Natural killer cell (primary cell): ENCODE measurements at regions of chr19 and their contacts with region 1.

Region 1: DNA sequence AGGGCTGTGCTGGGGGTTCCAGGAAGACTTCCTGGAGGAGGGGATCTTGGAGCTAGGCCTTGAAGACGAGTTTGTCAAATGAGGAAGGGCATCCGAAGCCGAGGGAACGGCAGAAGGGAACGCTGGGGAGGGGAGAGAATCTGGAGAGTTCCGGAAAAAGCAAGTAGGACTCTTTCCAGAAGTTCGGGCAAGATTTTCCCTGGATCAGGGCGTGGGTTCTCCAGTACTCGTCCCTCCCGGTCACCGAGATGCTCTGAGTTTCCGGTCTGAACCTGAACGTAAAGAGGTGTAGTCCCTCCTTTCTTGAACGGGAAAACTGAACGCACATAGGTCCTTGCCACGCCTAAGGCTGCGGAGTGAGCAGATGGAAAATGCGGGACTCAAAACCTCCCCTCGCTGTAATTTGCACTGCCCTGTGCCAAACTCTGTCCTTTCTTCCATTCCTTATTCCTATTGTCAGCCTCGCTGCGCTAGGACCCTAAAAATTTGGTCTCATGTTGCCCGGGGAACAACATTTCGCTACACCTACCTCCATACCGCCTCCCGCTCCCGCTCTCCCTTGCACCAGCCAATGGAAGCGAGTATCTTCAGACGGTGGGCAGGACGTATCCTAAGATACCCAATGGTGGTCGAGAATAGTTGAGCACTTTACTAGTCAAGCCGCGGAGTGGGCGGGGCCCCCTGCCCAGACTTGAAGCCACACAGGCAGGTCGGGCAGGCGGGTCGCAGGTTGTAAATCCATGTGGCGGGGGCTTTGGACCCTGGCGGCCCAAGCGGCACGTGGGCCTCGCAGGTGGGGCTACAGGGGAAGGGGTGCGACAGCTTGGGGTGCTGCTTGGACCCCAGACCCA is at the start of gene GTPBP3:
- DNase-seq: peak; percentile 93 to 98
- ATAC-seq: peak; percentile 86 to 98 (median 90)
- H3K4me3 ChIP-seq: peak within 1 kb of the TSS; percentile 72
- H3K4me3 Mint-ChIP-seq: peak within 1 kb of the TSS; percentile 93
- H3K27ac ChIP-seq: peak within 1 kb of the TSS; percentile 78
- H3K27ac Mint-ChIP-seq: peak within 1 kb of the TSS; percentile 88 to 93
- H3K4me1 ChIP-seq: peaks cover 40% of the 10 kb centered on the region
- H3K4me1 Mint-ChIP-seq: peaks cover 25 to 40% of the 10 kb centered on the region in 2 donors
- H3K27me3 ChIP-seq: no peaks in the 10 kb centered on the region
- H3K27me3 Mint-ChIP-seq: no peaks in the 10 kb centered on the region
- CTCF ChIP-seq: no peak
- total RNA-seq, gene GTPBP3: 21.6 to 33.0 (median 27.7) TPM

Region 2: DNA sequence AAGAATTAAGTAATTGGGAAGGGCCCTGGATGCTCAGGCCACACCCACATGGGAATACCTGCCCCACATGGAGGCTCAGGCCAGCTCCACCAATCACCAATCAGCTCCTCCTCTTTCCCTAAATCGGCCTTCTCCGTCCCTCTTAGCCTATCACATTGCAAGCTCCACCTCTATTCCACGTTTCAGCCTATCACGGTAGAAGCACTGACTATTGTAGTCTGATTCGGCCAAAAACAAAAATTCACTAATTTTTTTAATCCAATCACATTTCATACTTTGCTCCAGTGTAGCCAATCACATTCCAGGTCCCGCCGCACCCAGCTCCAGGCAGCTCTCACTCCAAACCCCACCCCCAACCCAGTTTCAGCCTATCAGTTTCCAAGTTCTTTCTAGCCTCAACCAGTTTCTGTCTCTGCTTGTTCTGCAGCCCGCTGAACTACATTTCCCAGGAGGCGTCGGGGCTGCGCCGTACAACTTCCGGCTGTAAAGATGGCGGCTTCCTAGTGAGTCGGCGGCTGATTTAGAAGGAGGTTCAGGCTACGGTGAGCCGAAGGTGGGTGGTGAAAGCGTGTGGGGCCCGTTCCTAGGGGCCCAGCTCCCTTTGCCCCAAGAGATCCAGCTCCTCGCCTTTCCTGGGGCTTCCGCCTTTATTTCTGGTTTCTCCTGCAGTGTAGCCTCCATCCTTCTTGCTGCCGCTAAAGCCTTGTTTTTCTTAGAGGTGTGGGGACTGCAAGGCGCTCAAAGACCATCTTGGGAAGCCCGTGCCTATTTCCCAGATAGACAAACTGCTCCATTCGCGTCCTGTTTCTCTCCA is 69.9 kb before region 1 on chr19 and contains the start of gene BABAM1:
- intact Hi-C with region 1: loop called (anchors 1 kb)
- DNase-seq: peak; percentile 86 to 98
- ATAC-seq: peak; percentile 90 to 97 (median 91)
- H3K4me3 ChIP-seq: peak within 1 kb of the TSS; percentile 82
- H3K4me3 Mint-ChIP-seq: peak within 1 kb of the TSS; percentile 88
- H3K27ac ChIP-seq: peak within 1 kb of the TSS; percentile 63
- H3K27ac Mint-ChIP-seq: peak within 1 kb of the TSS; percentile 85
- H3K4me1 ChIP-seq: peaks cover 24% of the 10 kb centered on the region
- H3K4me1 Mint-ChIP-seq: peaks cover 15 to 16% of the 10 kb centered on the region in 2 donors
- H3K27me3 ChIP-seq: no peaks in the 10 kb centered on the region
- H3K27me3 Mint-ChIP-seq: no peaks in the 10 kb centered on the region
- CTCF ChIP-seq: no peak
- total RNA-seq, gene BABAM1: 106 to 127 (median 106) TPM

Region 3: GRCh38 chr19:17292286-17293097 is 44.6 kb before region 1 on chr19:
- intact Hi-C with region 1: loop called (anchors 5 kb)
- DNase-seq: peak; percentile 78 to 90
- ATAC-seq: peak; percentile 91 to 96 (median 93)
- H3K4me3 ChIP-seq: peak overlapping the region; percentile 48
- H3K4me3 Mint-ChIP-seq: peak overlapping the region; percentile 86
- H3K27ac ChIP-seq: no peak overlapping the region
- H3K27ac Mint-ChIP-seq: peak overlapping the region in 1 of 2 donors; percentile 67
- H3K4me1 ChIP-seq: peaks cover 11% of the 10 kb centered on the region
- H3K4me1 Mint-ChIP-seq: peaks cover 0 to 10% of the 10 kb centered on the region in 2 donors
- H3K27me3 ChIP-seq: no peaks in the 10 kb centered on the region
- H3K27me3 Mint-ChIP-seq: no peaks in the 10 kb centered on the region
- CTCF ChIP-seq: peak; percentile 65

Region 4: DNA sequence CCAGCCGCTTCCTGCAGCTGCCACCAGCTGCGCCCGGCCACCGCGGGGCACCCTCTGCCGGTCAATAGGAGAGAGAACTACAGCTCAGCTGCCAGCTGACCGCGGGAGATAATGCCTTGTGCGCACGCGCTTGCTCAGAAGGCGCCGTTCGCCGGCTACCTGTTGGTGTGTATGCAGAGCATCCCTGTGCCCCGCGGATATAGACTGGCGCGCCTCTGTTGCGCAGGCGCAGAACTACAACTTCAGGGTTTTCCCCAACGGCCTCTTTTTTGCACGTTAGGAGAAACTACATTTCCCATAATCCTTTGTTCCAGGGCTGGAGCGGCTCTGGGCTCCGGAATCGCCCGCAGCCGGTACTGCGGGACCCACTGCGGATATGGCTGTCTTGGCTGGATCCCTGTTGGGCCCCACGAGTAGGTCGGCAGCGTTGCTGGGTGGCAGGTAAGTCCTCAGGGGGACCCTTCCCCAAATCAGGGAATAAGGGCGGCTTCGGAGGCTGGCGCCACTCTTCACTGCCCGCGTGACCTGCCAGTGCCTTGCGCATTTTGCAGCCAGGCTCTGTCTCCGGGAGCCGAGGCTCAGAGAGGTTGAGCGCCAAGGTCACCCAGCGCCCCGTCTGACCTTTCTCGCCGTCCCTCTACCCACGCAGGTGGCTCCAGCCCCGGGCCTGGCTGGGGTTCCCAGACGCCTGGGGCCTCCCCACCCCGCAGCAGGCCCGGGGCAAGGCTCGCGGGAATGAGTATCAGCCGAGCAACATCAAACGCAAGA is 31.4 kb before region 1 on chr19 and contains the start of gene MRPL34:
- intact Hi-C with region 1: loop called (anchors 1 kb)
- DNase-seq: peak; percentile 86 to 98
- ATAC-seq: peak; percentile 50 to 78 (median 62)
- H3K4me3 ChIP-seq: peak within 1 kb of the TSS; percentile 55
- H3K4me3 Mint-ChIP-seq: peak within 1 kb of the TSS; percentile 82
- H3K27ac ChIP-seq: peak within 1 kb of the TSS; percentile 58
- H3K27ac Mint-ChIP-seq: peak within 1 kb of the TSS; percentile 81 to 89
- H3K4me1 ChIP-seq: peaks cover 54% of the 10 kb centered on the region
- H3K4me1 Mint-ChIP-seq: peaks cover 32 to 49% of the 10 kb centered on the region in 2 donors
- H3K27me3 ChIP-seq: no peaks in the 10 kb centered on the region
- H3K27me3 Mint-ChIP-seq: no peaks in the 10 kb centered on the region
- CTCF ChIP-seq: peak; percentile 66
- total RNA-seq, gene MRPL34: 26.9 to 40.8 (median 39.4) TPM

Region 5: DNA sequence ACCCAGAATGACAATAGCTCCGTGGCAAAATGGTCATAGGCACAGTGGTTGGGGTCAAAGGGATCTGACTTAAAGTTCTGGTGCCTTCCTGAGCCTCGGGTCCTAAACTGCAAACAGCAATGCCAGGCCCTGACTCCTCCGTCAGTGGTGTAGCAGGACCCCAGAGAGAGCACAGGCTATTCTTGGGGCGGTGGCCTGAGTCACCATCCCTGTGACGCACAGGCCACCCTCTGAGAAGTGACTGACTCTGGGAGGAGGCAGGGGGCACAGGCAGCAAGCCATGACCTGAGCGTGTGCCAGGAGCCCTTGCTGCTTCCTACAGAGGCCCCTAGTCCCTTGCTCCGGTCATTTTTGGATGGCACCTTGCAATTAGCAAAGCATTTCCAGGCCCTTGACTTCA is 21.3 kb after region 1 on chr19:
- intact Hi-C with region 1: no loop called
- DNase-seq: no peak
- ATAC-seq: no peak
- H3K4me3 ChIP-seq: no peak overlapping the region
- H3K4me3 Mint-ChIP-seq: no peak overlapping the region
- H3K27ac ChIP-seq: no peak overlapping the region
- H3K27ac Mint-ChIP-seq: no peak overlapping the region
- H3K4me1 ChIP-seq: no peaks in the 10 kb centered on the region
- H3K4me1 Mint-ChIP-seq: no peaks in the 10 kb centered on the region
- H3K27me3 ChIP-seq: no peaks in the 10 kb centered on the region
- H3K27me3 Mint-ChIP-seq: peaks cover 0 to 8% of the 10 kb centered on the region in 2 donors
- CTCF ChIP-seq: no peak

Region 6: DNA sequence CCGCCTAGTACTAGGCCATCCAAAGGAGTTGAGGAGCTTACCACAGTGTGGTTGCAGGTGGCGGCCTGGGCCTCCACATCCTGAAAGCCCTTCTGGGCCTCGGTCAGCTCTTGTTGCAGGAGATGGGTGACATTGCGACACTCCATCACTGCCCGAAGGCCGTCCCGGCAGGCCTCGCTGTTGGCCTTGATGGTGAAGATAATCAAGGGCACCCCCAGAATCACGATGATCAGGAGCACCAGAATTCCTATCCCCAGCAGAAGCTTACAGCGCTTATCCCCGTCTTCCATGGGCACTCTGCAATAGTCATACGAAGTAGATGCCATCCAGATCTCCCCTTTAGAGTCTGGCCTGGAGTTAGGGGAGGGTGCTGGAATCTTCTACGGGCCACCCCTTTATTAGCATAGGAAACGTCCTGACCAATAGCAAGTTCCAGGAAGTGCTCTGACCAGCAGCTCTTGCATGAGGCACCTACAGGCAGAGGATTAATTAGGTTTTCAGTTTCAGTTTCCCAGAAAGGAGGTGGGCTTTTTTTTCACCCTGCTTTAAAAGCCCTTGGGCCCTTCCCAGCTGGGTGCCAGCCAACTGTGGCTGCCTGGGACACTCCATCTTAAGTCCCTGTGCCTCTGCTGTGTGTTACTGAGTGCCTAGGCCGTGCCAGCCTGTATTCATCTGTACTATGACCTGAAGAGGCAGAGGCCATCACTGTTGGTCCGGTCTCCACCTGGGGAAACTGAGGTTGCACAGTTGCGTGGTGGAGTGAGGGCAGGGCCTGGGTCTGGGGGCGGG is 68.3 kb after region 1 on chr19 and contains the start of gene BST2:
- intact Hi-C with region 1: loop called (anchors 10 kb)
- DNase-seq: peak; percentile 47 to 83
- ATAC-seq: peak; percentile 88 to 94 (median 89)
- H3K4me3 ChIP-seq: peak within 1 kb of the TSS; percentile 78
- H3K4me3 Mint-ChIP-seq: peak within 1 kb of the TSS; percentile 96
- H3K27ac ChIP-seq: peak within 1 kb of the TSS; percentile 89
- H3K27ac Mint-ChIP-seq: peak within 1 kb of the TSS; percentile 89 to 97
- H3K4me1 ChIP-seq: peaks cover 56% of the 10 kb centered on the region
- H3K4me1 Mint-ChIP-seq: peaks cover 43 to 45% of the 10 kb centered on the region in 2 donors
- H3K27me3 ChIP-seq: no peaks in the 10 kb centered on the region
- H3K27me3 Mint-ChIP-seq: no peaks in the 10 kb centered on the region
- CTCF ChIP-seq: no peak
- total RNA-seq, gene BST2: 84.8 to 106 (median 100) TPM